ENCODE measurements at regions of chr19 and their contacts with region 1.

Region 1: DNA sequence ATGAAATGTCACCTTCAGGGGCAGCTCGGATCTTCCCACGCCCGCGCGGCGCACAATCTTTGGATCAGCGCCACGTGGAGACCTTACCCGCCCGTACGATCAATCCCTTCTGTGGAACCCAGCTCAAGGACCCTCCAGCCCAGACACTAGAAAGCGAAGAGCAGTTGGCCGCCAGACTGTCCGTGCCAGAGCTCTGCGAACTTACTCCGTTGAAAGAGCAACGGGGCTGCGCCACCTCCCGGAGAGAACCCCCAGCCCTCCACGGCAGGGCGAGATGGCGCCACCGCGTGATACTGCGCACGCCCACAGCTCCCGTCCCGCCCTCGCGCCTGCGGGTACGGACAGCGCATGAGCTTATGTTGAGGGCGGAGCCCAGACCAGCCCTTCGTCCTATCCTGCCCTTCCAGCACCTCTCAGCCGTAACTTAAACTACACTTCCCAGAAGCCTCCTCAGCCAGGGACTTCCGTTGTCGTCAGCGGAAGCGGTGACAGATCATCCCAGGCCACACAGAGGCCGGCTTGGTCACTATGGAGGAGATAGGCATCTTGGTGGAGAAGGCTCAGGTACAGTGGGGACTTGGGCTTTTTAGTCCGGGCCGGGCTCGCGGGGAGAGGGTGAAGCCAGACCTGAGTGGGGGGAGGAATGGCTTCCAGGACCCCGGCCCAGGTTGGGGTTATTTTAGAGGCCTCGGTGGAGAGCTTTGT is at the start of gene PSMC4:
- DNase-seq: peak; percentile 100
- H3K4me3 Mint-ChIP-seq: peak within 1 kb of the TSS; percentile 99
- H3K27ac Mint-ChIP-seq: peak within 1 kb of the TSS; percentile 87
- H3K4me1 Mint-ChIP-seq: peaks cover 39% of the 10 kb centered on the region
- H3K27me3 Mint-ChIP-seq: no peaks in the 10 kb centered on the region
- CTCF ChIP-seq: peak; percentile 77
- total RNA-seq, gene PSMC4: 300 and 316 TPM in 2 replicates

Region 2: GRCh38 chr19:39792999-39793546 is 177.8 kb before region 1 on chr19:
- CTCF ChIA-PET with region 1: interaction called, 29 read pairs
- intact Hi-C with region 1: loop called (anchors 5 kb)
- DNase-seq: peak; percentile 86
- H3K4me3 Mint-ChIP-seq: peak overlapping the region; percentile 53
- H3K27ac Mint-ChIP-seq: no peak overlapping the region
- H3K4me1 Mint-ChIP-seq: peaks cover 7% of the 10 kb centered on the region
- H3K27me3 Mint-ChIP-seq: peaks cover 34% of the 10 kb centered on the region
- CTCF ChIP-seq: peak; percentile 91

Region 3: DNA sequence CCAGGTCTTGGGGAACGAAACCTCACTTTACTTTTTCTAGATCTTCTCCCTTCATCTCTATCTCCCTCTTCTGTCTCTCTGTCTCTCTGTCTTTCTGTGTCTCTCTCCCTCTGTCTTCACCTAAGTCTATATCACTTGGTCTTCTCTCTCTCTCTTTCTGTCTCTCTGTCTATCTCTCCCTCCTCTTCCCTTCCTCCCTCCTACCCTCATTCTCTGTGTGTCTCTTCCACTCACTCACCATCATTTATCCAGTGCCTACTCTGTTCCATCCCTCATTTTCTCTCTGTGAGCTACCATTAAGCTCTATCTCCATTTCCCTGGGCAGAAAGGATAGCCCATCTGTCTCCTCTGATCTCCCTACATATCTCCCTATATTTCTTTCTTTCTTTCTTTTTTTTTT is 92.4 kb before region 1 on chr19:
- CTCF ChIA-PET with region 1: interaction called, 17 read pairs
- intact Hi-C with region 1: no loop called
- DNase-seq: no peak
- H3K4me3 Mint-ChIP-seq: no peak overlapping the region
- H3K27ac Mint-ChIP-seq: no peak overlapping the region
- H3K4me1 Mint-ChIP-seq: peaks cover 8% of the 10 kb centered on the region
- H3K27me3 Mint-ChIP-seq: no peaks in the 10 kb centered on the region
- CTCF ChIP-seq: no peak

Region 4: DNA sequence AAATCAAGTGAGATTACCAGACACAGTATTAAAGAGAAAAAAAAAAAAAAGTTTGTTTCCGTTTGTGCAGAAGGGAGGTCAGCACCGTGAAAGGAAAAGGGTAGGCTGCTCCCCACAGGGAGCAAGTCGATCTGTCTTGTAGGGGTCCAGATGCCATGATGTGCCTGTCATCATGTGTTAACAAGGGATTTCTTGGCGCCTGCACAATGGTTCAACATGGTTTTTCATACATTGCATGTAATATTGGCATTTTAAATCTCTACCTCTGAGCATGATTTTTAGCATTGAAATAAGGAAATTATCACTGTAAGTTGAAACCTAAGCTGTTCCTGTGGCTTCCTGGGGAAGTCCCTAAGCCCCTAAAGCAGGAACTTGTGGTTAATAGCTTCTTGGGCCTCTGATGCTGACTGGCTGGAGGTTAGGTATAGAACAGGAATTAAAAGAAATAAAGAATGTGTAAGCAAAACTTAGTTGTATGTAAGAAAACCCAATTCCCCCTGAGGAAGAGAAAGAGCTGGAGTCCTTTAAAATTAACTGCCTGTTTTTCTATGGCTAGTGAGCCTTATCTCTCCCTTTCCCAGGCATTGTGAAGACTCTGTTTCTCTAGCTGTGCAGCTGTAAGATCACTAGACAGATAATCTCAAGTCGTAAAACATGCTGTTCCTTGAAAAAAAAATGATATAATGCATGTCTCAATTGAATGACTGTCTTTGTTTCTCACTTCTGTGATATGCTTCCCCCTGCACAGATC is 29.0 kb before region 1 on chr19:
- CTCF ChIA-PET with region 1: interaction called, 29 read pairs
- intact Hi-C with region 1: loop called (anchors 1 kb)
- DNase-seq: peak; percentile 74
- H3K4me3 Mint-ChIP-seq: peak overlapping the region; percentile 51
- H3K27ac Mint-ChIP-seq: peak overlapping the region; percentile 96
- H3K4me1 Mint-ChIP-seq: peaks cover 83% of the 10 kb centered on the region
- H3K27me3 Mint-ChIP-seq: no peaks in the 10 kb centered on the region
- CTCF ChIP-seq: no peak

Region 5: DNA sequence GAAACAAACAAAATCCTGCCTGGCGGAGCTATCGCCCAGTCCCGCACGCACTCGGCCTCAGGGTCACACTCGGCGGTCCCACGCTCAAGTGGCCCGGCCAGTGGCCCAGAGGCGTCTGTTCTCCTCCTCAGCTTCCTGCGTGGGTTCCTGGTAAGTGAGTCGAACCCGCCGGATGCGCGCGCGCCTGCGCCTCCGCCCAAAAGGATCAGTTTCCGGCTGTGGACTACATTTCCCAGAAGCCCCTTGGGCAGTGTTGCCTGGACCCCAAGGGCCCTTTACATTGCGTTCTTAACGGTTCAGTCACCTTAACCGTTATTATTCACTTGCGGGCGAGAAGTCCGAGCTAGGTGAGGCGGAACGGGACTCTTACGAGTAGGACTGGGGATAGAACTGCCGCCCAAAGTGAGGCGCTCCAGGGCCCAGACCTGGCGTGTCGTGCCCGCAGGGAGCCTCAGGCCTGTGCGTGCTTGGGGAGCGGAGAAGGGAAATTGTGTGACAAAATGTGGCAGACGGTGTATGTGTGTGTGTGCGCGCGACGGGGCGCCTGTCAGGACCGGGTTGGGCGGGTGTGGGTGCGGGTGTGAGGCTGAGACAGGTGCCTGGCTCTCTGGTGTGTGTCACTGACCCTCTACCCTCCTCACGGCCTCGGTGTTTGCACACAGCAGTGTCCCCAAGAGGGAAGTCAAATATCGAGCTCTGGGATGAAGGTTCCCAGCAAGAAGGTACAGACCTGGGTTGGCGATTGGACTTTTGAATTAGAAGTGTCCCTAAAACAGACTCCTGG is 26.2 kb after region 1 on chr19 and contains the start of gene ZNF546:
- CTCF ChIA-PET with region 1: interaction called, 11 read pairs
- intact Hi-C with region 1: no loop called
- DNase-seq: peak; percentile 87
- H3K4me3 Mint-ChIP-seq: peak within 1 kb of the TSS; percentile 96
- H3K27ac Mint-ChIP-seq: peak within 1 kb of the TSS; percentile 92
- H3K4me1 Mint-ChIP-seq: peaks cover 18% of the 10 kb centered on the region
- H3K27me3 Mint-ChIP-seq: no peaks in the 10 kb centered on the region
- CTCF ChIP-seq: no peak
- total RNA-seq, gene ZNF546: 4.7 and 5.7 TPM in 2 replicates